ENCODE measurements at regions of chr16 and their contacts with region 1.

Region 1: DNA sequence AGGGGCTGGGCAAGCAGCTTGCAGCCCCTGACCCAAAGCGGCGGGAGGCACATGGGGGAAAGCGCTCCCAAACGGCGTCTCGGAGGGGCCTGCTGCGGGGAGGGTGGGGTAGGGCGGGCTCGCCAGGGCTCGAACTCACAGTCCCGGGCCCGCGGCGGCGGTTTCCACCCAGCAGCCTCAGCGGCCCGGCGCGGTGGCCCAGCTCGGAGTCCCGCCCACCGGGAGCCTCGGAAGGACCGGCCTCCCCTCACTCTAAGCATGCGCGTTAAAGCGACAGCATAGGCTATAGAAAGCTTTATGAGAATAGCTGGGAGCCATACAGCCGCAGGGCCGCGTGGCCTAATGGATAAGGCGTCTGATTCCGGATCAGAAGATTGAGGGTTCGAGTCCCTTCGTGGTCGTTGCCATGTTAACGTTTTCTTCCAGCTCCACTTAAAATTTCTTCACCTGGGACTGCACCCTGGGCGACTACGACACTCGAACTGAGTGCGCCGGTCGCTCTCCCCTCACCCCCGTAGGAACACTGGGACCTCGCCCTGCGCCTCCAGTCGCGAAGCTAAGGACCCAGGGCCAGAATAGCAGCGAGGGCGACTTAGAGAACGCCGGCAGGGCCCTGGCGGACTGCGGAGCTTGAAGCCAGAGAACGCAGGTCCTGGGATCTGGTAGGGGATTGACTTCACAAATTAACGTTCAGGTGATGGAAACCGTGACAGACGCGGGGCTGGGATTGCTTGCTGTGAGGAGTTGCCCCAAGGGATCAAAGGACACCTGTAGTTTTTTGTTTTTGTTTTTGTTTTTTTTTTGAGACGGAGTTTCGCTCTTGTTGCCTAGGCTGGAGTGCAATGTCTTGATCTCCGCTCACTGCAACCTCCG is 15.8 kb downstream of the ZNF213 start:
- DNase-seq: peak; percentile 96 to 99 (median 97)
- H3K4me3 ChIP-seq: peak overlapping the region; percentile 77 to 92
- H3K4me3 Mint-ChIP-seq: peak overlapping the region; percentile 87 to 96 (median 91)
- H3K27ac ChIP-seq: peak overlapping the region; percentile 64
- H3K27ac Mint-ChIP-seq: peak overlapping the region; percentile 87 to 100 (median 95)
- H3K4me1 ChIP-seq: peaks cover 27% of the 10 kb centered on the region
- H3K4me1 Mint-ChIP-seq: peaks cover 22 to 47% (median 26%) of the 10 kb centered on the region in 4 donors
- H3K27me3 ChIP-seq: no peaks in the 10 kb centered on the region
- H3K27me3 Mint-ChIP-seq: peaks cover 3 to 8% of the 10 kb centered on the region in 2 donors

Region 2: GRCh38 chr16:3198334-3199072 is 47.9 kb after region 1 on chr16:
- CTCF ChIA-PET with region 1: no interaction called
- POLR2A ChIA-PET with region 1: no interaction called
- intact Hi-C with region 1: no loop called
- DNase-seq: no peak
- H3K4me3 ChIP-seq: no peak overlapping the region
- H3K4me3 Mint-ChIP-seq: no peak overlapping the region
- H3K27ac ChIP-seq: no peak overlapping the region
- H3K27ac Mint-ChIP-seq: peak overlapping the region in 1 of 7 donors; percentile 18
- H3K4me1 ChIP-seq: no peaks in the 10 kb centered on the region
- H3K4me1 Mint-ChIP-seq: peaks cover 0 to 9% (median 2%) of the 10 kb centered on the region in 4 donors
- H3K27me3 ChIP-seq: peaks cover 18% of the 10 kb centered on the region
- H3K27me3 Mint-ChIP-seq: peaks cover 18 to 25% of the 10 kb centered on the region in 2 donors

Region 3: DNA sequence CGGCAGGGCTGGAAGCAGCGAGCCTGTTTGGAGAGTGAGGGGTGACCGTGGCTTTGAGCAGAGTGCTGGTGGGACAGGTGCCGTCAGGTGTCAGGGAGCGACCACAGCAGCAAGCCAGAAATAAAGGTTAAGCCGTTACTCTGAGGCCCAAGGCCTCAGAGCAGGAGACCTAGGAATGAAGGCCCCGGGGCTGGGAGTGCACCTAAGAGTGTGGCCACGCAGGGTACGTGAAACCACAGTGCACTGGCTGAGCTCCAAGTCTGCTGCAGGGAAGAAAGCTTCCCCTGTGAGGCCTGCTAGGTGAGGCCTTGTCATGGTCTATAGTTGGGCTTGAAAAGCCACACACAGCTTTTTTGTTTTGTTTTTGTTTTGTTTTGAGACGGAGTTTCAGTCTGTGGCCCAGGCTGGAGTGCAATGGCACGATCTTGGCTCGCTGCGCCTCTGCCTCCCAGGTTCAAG is 358.9 kb after region 1 on chr16:
- CTCF ChIA-PET with region 1: no interaction called
- POLR2A ChIA-PET with region 1: interaction called, 4 read pairs
- intact Hi-C with region 1: loop called (anchors 10 kb)
- DNase-seq: peak; percentile 77 to 89 (median 83)
- H3K4me3 ChIP-seq: no peak overlapping the region
- H3K4me3 Mint-ChIP-seq: peak overlapping the region; percentile 12 to 80 (median 56)
- H3K27ac ChIP-seq: peak overlapping the region; percentile 62
- H3K27ac Mint-ChIP-seq: peak overlapping the region; percentile 50 to 98 (median 90)
- H3K4me1 ChIP-seq: peaks cover 59% of the 10 kb centered on the region
- H3K4me1 Mint-ChIP-seq: peaks cover 38 to 67% (median 48%) of the 10 kb centered on the region in 4 donors
- H3K27me3 ChIP-seq: no peaks in the 10 kb centered on the region
- H3K27me3 Mint-ChIP-seq: no peaks in the 10 kb centered on the region